Psoas muscle (tissue), 8 donors: ENCODE measurements at regions of chr6 and their contacts with region 1.

Region 1: GRCh38 chr6:36929607-36930006 is 24.9 kb upstream of the PI16 start:
- DNase-seq: no peak
- ATAC-seq: peak in 3 of 4 donors; percentile 28 to 50 (median 46)
- H3K4me3 ChIP-seq: no peak overlapping the region
- H3K27ac ChIP-seq: peak overlapping the region; percentile 84
- H3K4me1 ChIP-seq: peaks cover 36% of the 10 kb centered on the region
- H3K27me3 ChIP-seq: no peaks in the 10 kb centered on the region
- CTCF ChIP-seq: no peak

Region 2: DNA sequence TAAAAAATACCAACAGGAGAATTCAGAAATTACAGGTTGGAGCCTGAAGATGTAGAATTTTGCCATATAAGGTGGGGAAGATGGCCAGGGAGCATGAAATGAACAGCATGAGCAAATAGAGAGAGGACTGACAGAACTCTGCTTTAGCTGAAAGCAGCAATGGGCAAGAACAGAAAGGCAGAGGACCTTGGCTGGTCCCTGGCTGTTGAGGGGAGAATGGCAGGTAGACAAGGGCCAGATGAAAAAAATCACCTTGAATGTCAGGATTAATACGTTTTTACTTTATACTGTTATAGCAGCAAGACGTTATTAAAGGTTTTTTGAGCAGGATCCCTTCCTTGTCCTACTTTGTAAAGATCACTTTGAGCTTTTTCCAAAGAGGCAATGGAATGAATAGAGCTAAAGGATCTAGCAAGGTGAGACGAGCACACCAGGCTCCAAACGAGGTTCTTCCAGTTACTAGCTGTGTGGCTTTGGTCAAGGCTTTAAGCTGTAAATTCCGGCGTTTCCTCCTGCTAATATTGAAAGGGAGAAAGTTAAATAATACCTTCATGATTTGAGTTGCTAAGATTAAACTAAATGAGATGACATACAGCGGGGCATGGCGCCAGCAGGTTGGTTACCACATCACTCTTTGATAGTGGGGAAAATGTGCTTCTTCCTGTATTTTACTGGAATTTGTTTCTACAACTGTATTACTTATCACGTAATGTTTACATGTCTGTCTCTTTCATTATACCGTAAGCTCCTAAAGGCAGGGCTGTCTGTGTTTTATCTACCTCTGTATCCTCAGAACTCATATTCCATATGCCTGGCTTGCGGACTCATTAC is 55.8 kb before region 1 on chr6:
- intact Hi-C with region 1: no loop called
- DNase-seq: peak in 1 of 2 donors; percentile 48
- ATAC-seq: peak in 1 of 4 donors; percentile 5
- H3K4me3 ChIP-seq: peak overlapping the region; percentile 79
- H3K27ac ChIP-seq: peak overlapping the region; percentile 87
- H3K4me1 ChIP-seq: peaks cover 5% of the 10 kb centered on the region
- H3K27me3 ChIP-seq: no peaks in the 10 kb centered on the region
- CTCF ChIP-seq: no peak

Region 3: GRCh38 chr6:36979347-36979742 is 49.7 kb after region 1 on chr6:
- intact Hi-C with region 1: loop called (anchors 5 kb)
- DNase-seq: peak in 1 of 2 donors; percentile 78
- ATAC-seq: peak; percentile 62 to 86 (median 70)
- H3K4me3 ChIP-seq: no peak overlapping the region
- H3K27ac ChIP-seq: peak overlapping the region; percentile 32
- H3K4me1 ChIP-seq: peaks cover 42% of the 10 kb centered on the region
- H3K27me3 ChIP-seq: no peaks in the 10 kb centered on the region
- CTCF ChIP-seq: peak; percentile 51

Region 4: GRCh38 chr6:36985808-36986703 is 56.4 kb after region 1 on chr6 and contains the start of gene MTCH1:
- intact Hi-C with region 1: loop called in 1 of 2 experiments (anchors 5 kb)
- DNase-seq: peak; percentile 89 to 96
- ATAC-seq: peak; percentile 95 to 97 (median 96)
- H3K4me3 ChIP-seq: peak within 1 kb of the TSS; percentile 98
- H3K27ac ChIP-seq: peak within 1 kb of the TSS; percentile 94
- H3K4me1 ChIP-seq: peaks cover 35% of the 10 kb centered on the region
- H3K27me3 ChIP-seq: no peaks in the 10 kb centered on the region
- CTCF ChIP-seq: no peak
- total RNA-seq, gene MTCH1: 74.6 to 89.2 (median 85.4) TPM